Activated CD4-positive, alpha-beta T cell treated with anti-CD3 and anti-CD28 coated beads for 36 hours (primary cell): ENCODE measurements at regions of chr5 and their contacts with region 1.

Region 1: DNA sequence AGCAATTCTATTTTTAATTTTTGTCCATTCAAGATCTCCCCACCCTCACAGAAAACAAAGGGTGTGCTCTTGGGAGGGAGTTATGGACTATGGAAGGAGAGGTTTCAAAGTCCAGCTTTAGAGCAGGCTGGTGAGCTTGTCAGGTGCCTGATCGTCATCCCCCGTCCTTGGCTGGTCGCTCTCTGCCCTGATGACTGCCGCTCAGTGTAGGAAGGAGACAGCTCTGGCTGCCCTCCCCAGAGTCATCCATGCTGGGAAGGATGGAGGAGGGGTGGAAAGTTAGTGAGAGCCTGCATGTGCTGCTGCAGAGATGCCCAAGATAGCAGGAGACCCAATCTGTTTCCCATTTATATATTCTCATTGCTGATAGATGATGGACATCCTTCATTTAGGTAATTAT is 96.6 kb downstream of the NLN start:
- DNase-seq: no peak
- ATAC-seq: no peak
- H3K4me3 Mint-ChIP-seq: no peak overlapping the region
- H3K27ac Mint-ChIP-seq: no peak overlapping the region
- H3K4me1 Mint-ChIP-seq: peaks cover 14% of the 10 kb centered on the region
- H3K27me3 Mint-ChIP-seq: no peaks in the 10 kb centered on the region

Region 2: GRCh38 chr5:65779643-65780042 is 38.9 kb before region 1 on chr5:
- CTCF ChIA-PET with region 1: no interaction called
- POLR2A ChIA-PET with region 1: no interaction called
- intact Hi-C with region 1: loop called in 1 of 2 experiments (anchors 5 kb)
- DNase-seq: no peak
- ATAC-seq: peak; percentile 75
- H3K4me3 Mint-ChIP-seq: no peak overlapping the region
- H3K27ac Mint-ChIP-seq: no peak overlapping the region
- H3K4me1 Mint-ChIP-seq: peaks cover 25% of the 10 kb centered on the region
- H3K27me3 Mint-ChIP-seq: no peaks in the 10 kb centered on the region

Region 3: DNA sequence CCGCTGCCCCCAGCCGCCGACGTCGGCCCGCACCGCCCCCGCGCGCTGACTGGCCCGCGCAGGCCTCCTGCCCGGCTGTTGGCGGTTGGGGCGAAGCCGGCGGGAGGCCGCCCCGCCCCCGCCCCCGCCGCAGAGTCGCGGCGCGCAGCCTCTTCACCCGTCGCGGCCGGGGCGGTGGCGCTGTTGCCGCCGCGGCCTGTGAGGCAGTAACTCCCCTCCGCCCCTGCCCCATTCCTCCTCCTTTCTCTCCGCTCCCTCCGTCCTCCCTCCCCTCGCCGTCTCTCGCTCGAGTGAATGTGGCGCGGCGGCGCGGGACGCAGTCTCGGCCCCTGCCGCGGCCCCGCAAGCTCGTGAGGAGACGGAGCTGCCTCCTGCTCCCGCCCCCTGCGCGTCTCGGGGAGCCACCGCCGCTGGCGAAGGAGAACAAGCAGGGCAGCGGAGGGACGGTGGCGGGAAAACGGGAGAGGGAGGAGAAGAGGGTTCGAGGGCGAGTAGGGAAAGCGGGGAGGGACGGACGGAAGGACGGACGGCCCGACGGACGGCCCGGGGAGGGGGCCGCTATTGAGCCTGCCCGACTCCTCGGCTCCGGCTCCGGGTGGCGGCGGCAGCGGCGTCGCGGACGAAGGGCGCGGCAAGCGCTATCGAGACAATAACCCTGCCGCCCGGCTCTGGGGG is 107.1 kb after region 1 on chr5:
- CTCF ChIA-PET with region 1: no interaction called
- POLR2A ChIA-PET with region 1: no interaction called
- intact Hi-C with region 1: no loop called
- DNase-seq: peak; percentile 84
- ATAC-seq: peak; percentile 65
- H3K4me3 Mint-ChIP-seq: peak overlapping the region; percentile 85
- H3K27ac Mint-ChIP-seq: peak overlapping the region; percentile 87
- H3K4me1 Mint-ChIP-seq: peaks cover 28% of the 10 kb centered on the region
- H3K27me3 Mint-ChIP-seq: no peaks in the 10 kb centered on the region